ENCODE measurements at regions of chr16 and their contacts with region 1.

Region 1: GRCh38 chr16:53080345-53081031 is 25.7 kb downstream of the CHD9 start:
- DNase-seq: no peak
- H3K4me3 ChIP-seq: peak overlapping the region in 1 of 4 experiments; percentile 0; a peak in 1 of 8 replicates
- H3K27ac ChIP-seq: no peak overlapping the region
- H3K4me1 ChIP-seq: peaks cover 7 to 25% (median 19%) of the 10 kb centered on the region in 4 experiments; a peak in 4 of 7 replicates
- H3K27me3 ChIP-seq: no peaks in the 10 kb centered on the region
- CTCF ChIP-seq: no peak
- EP300 ChIP-seq: no peak
- POLR2A ChIP-seq: no peak
- RAD21 ChIP-seq: no peak

Region 2: GRCh38 chr16:53068423-53068833 is 12.1 kb before region 1 on chr16:
- CTCF ChIA-PET with region 1: no interaction called
- POLR2A ChIA-PET with region 1: interaction called, 10 read pairs
- DNase-seq: no peak
- H3K4me3 ChIP-seq: no peak overlapping the region
- H3K27ac ChIP-seq: 0 out of 2 replicates have a peak overlapping the region, but pooled peaks have one; percentile 8
- H3K4me1 ChIP-seq: peaks cover 0 to 8% (median 3%) of the 10 kb centered on the region in 4 experiments; a peak in 3 of 7 replicates
- H3K27me3 ChIP-seq: no peaks in the 10 kb centered on the region
- CTCF ChIP-seq: no peak
- EP300 ChIP-seq: no peak
- POLR2A ChIP-seq: no peak
- RAD21 ChIP-seq: no peak